ENCODE measurements at regions of chr1 and their contacts with region 1.

Region 1: DNA sequence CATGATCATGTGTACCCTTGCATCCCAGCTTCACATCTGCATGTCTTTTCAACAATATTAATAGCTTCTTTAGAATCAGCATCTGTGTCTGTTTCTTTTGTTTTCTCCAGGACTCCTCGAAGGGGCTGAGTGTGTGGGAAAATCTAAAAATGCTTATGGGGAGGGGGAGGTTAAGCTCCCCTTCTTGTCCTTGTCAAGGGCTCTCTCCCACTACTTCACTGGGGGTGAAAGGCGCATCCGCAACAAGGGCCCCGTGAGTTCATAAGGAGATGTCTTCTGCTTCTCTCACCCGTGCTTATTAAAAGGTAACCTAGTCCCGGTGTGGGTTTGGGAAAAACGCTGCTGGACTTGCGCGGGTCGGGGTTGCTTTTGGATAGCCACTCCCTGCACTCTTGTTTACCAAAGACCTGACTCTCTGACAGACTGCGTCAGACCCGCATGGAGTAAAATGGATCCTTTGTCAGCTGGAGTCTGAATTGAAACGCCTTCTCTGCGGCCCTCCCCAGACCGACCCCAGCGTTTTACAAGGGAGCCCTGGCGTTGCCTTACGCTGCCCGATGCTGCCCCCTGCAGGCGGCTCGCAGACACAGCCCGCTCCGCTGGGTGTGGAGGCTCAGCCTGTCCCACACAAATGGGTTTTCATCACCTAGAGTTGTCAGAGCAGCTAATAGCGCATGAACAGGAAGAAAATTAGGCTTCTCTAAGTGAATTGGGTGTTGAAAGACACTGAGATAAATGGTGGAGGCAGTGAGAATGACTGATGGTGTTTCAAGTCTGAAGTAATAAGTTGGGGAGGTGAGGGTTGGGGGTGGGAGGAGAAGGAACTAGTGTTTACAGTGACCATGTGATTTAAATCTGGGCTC is 53.8 kb downstream of the IER5 start:
- DNase-seq: peak; percentile 90 to 96
- H3K4me3 ChIP-seq: peak overlapping the region in 3 of 4 donors; percentile 23 to 29 (median 27)
- H3K27ac ChIP-seq: peak overlapping the region in 4 of 5 donors; percentile 11 to 67 (median 38)
- H3K4me1 ChIP-seq: peaks cover 6 to 24% (median 14%) of the 10 kb centered on the region in 4 donors
- H3K27me3 ChIP-seq: no peaks in the 10 kb centered on the region
- CTCF ChIP-seq: peak in 6 of 7 experiments; percentile 48 to 97 (median 93)
- EP300 ChIP-seq: no peak
- POLR2A ChIP-seq: no peak

Region 2: DNA sequence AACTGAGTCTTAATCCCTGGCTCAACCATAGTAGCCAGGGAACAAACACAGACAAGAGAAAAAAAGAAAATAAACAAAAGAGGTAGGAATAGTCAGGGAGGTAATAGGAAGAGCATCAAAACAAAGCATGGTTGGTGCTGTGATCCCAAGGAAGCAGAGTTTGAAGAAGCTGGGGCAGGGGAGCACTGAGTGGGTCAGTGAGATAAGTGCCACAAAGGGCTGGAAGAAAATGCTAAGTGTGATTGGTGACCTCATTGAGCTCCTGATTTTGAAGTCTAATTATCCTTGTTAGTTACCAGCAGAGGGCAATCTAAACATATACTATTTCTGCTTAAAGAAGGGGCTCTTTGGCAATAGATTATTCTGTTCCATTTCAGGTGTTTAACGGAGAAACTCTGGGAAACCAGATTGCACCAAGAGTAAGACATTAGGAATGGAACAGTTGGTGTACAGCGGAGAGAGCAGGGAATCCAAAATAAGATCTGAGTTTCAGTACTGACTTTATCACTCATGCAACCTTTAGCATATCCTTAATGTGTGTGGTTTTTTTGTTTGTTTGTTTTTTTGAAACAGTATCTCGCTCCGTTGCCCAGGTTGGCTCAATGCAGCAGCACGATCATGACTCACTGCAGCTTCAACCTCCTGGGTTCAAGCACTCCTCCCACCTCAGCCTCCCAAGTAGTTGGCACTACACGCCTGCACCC is 260.4 kb before region 1 on chr1:
- intact Hi-C with region 1: loop called (anchors 10 kb)
- DNase-seq: peak in 1 of 2 donors; percentile 70
- H3K4me3 ChIP-seq: no peak overlapping the region
- H3K27ac ChIP-seq: no peak overlapping the region
- H3K4me1 ChIP-seq: peaks cover 0 to 8% (median 0%) of the 10 kb centered on the region in 4 donors
- H3K27me3 ChIP-seq: no peaks in the 10 kb centered on the region
- CTCF ChIP-seq: peak in 4 of 7 experiments; percentile 5 to 49 (median 37)
- EP300 ChIP-seq: no peak
- POLR2A ChIP-seq: no peak

Region 3: GRCh38 chr1:180898441-180899219 is 243.7 kb before region 1 on chr1:
- intact Hi-C with region 1: no loop called
- DNase-seq: peak in 1 of 2 donors; percentile 26
- H3K4me3 ChIP-seq: no peak overlapping the region
- H3K27ac ChIP-seq: no peak overlapping the region
- H3K4me1 ChIP-seq: peaks cover 0 to 11% (median 6%) of the 10 kb centered on the region in 4 donors
- H3K27me3 ChIP-seq: no peaks in the 10 kb centered on the region
- CTCF ChIP-seq: no peak
- EP300 ChIP-seq: no peak
- POLR2A ChIP-seq: no peak

Region 4: GRCh38 chr1:181033799-181034451 is 108.4 kb before region 1 on chr1 and contains the start of gene MR1:
- intact Hi-C with region 1: loop called (anchors 10 kb)
- DNase-seq: peak in 1 of 2 donors; percentile 90
- H3K4me3 ChIP-seq: peak within 1 kb of the TSS; percentile 43 to 45 (median 43)
- H3K27ac ChIP-seq: peak within 1 kb of the TSS; percentile 80 to 93 (median 91)
- H3K4me1 ChIP-seq: peaks cover 28 to 55% (median 38%) of the 10 kb centered on the region in 4 donors
- H3K27me3 ChIP-seq: no peaks in the 10 kb centered on the region
- CTCF ChIP-seq: no peak
- EP300 ChIP-seq: no peak
- POLR2A ChIP-seq: no peak
- total RNA-seq, gene MR1: 3.5 to 40.8 (median 11.2) TPM

Region 5: DNA sequence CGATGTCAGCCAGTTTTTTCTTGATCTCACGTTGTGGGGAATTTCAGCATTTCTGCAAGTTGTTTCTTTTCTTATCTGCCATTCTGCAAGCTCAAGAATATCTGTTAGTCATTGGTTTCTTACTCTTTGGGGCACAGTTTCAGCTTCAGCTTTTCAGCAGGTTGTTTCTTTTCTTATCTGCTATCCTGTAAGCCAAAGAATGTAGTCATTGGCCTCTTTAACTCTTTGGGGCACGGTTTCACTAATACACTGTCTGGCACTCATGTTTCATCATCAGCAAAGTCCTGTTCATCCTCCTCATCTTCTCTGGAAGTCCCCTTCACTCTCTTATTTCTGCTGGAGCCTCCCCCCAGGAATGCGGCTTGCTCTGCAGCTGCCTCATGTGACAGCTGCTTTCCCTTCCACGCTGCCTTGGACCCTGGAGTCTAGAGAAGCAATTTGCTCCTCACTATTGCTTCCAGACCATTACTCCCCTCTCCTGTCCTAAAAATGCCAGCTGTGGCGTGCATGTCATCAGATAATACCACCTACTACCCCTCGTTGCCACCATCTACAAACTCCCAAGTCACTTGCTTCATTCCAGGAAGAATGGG is 274.0 kb after region 1 on chr1:
- intact Hi-C with region 1: no loop called
- DNase-seq: no peak
- H3K4me3 ChIP-seq: no peak overlapping the region
- H3K27ac ChIP-seq: no peak overlapping the region
- H3K4me1 ChIP-seq: no peaks in the 10 kb centered on the region
- H3K27me3 ChIP-seq: peaks cover 0 to 7% (median 0%) of the 10 kb centered on the region in 3 donors
- CTCF ChIP-seq: no peak
- EP300 ChIP-seq: no peak
- POLR2A ChIP-seq: no peak